Esophagus muscularis mucosa (tissue), 4 donors: ENCODE measurements at regions of chr4 and their contacts with region 1.

Region 1: GRCh38 chr4:185108669-185109068 is 34.4 kb upstream of the SLC25A4 start:
- DNase-seq: peak; percentile 31
- H3K4me3 ChIP-seq: no peak overlapping the region
- H3K27ac ChIP-seq: no peak overlapping the region
- H3K4me1 ChIP-seq: peaks cover 17 to 28% (median 24%) of the 10 kb centered on the region in 4 donors
- H3K27me3 ChIP-seq: no peaks in the 10 kb centered on the region
- CTCF ChIP-seq: no peak
- EP300 ChIP-seq: no peak
- POLR2A ChIP-seq: no peak

Region 2: GRCh38 chr4:183430317-183430993 is 1678.2 kb before region 1 on chr4:
- intact Hi-C with region 1: no loop called
- DNase-seq: no peak
- H3K4me3 ChIP-seq: no peak overlapping the region
- H3K27ac ChIP-seq: no peak overlapping the region
- H3K4me1 ChIP-seq: peaks cover 0 to 8% (median 0%) of the 10 kb centered on the region in 4 donors
- H3K27me3 ChIP-seq: no peaks in the 10 kb centered on the region
- CTCF ChIP-seq: no peak
- EP300 ChIP-seq: no peak
- POLR2A ChIP-seq: no peak

Region 3: GRCh38 chr4:184627765-184628480 is 480.7 kb before region 1 on chr4:
- intact Hi-C with region 1: no loop called
- DNase-seq: no peak
- H3K4me3 ChIP-seq: no peak overlapping the region
- H3K27ac ChIP-seq: no peak overlapping the region
- H3K4me1 ChIP-seq: no peaks in the 10 kb centered on the region
- H3K27me3 ChIP-seq: no peaks in the 10 kb centered on the region
- CTCF ChIP-seq: no peak
- EP300 ChIP-seq: no peak
- POLR2A ChIP-seq: no peak

Region 4: GRCh38 chr4:184664448-184665210 is 444.0 kb before region 1 on chr4:
- intact Hi-C with region 1: loop called (anchors 10 kb)
- DNase-seq: no peak
- H3K4me3 ChIP-seq: no peak overlapping the region
- H3K27ac ChIP-seq: no peak overlapping the region
- H3K4me1 ChIP-seq: peaks cover 0 to 4% (median 0%) of the 10 kb centered on the region in 4 donors
- H3K27me3 ChIP-seq: no peaks in the 10 kb centered on the region
- CTCF ChIP-seq: no peak
- EP300 ChIP-seq: no peak
- POLR2A ChIP-seq: no peak